ENCODE measurements at regions of chr3 and their contacts with region 1.

Region 1: DNA sequence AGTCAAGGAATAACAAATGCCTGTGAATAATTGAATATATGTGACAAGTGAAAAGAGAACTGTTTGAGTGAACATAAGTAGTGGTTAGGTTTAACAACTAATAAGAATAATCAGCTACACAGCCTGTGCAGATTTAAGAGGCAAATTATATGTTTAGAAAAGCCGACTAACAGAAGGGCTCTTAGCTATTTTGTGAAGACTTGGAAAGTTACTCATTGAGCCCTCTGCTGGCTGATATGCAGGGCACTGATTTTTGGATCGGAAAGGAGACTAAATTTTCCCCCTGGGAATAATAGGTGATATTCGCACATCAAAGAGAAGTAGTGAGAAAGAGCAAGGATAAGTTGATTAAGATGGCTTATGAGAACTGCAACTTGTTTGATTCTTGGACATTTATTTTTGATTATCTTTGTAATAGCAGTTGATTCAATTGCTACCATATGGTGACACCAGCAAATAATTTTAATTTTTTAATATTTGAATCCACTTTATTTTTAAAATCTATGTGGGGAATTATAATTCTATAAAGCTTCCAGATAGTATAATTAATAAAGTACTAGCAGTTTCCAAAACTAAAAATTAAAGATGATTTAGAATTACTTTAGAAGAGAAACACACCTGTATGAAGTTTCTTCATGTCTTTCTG is 156.2 kb downstream of the NLGN1 start:
- DNase-seq: peak in 1 of 2 experiments; percentile 4
- H3K4me3 ChIP-seq: no peak overlapping the region
- H3K27ac ChIP-seq: no peak overlapping the region
- H3K4me1 ChIP-seq: no peaks in the 10 kb centered on the region
- H3K27me3 ChIP-seq: no peaks in the 10 kb centered on the region
- CTCF ChIP-seq: peak; percentile 77

Region 2: GRCh38 chr3:172808969-172809546 is 744.7 kb before region 1 on chr3:
- CTCF ChIA-PET with region 1: no interaction called
- POLR2A ChIA-PET with region 1: no interaction called
- intact Hi-C with region 1: loop called (anchors 10 kb)
- DNase-seq: peak in 1 of 2 experiments; percentile 38
- H3K4me3 ChIP-seq: no peak overlapping the region
- H3K27ac ChIP-seq: no peak overlapping the region
- H3K4me1 ChIP-seq: no peaks in the 10 kb centered on the region
- H3K27me3 ChIP-seq: no peaks in the 10 kb centered on the region
- CTCF ChIP-seq: peak; percentile 78

Region 3: GRCh38 chr3:172931746-172932285 is 621.9 kb before region 1 on chr3:
- CTCF ChIA-PET with region 1: no interaction called
- POLR2A ChIA-PET with region 1: no interaction called
- intact Hi-C with region 1: no loop called
- DNase-seq: no peak
- H3K4me3 ChIP-seq: no peak overlapping the region
- H3K27ac ChIP-seq: no peak overlapping the region
- H3K4me1 ChIP-seq: no peaks in the 10 kb centered on the region
- H3K27me3 ChIP-seq: no peaks in the 10 kb centered on the region
- CTCF ChIP-seq: no peak

Region 4: DNA sequence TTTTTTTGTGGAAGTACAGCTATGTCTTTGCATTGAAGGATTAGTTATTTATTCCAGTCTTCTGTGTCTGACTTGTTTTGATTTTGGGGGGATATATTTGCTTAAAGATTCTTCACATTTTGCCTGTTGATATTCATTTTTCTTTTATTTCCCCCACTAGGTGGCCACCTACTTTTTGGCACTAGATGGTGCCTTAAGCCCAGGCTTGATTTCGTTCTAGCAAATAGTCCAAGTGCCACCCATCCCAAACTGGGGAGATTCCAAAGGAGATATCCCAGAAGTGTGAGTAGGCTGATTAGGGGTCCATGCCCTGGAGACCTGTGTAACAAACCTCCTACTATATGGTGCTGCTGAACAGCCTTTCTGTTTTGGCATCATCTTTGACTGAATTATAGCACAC is 332.7 kb before region 1 on chr3:
- CTCF ChIA-PET with region 1: no interaction called
- POLR2A ChIA-PET with region 1: no interaction called
- intact Hi-C with region 1: loop called (anchors 10 kb)
- DNase-seq: peak; percentile 11 to 31
- H3K4me3 ChIP-seq: no peak overlapping the region
- H3K27ac ChIP-seq: no peak overlapping the region
- H3K4me1 ChIP-seq: no peaks in the 10 kb centered on the region
- H3K27me3 ChIP-seq: no peaks in the 10 kb centered on the region
- CTCF ChIP-seq: peak; percentile 65

Region 5: GRCh38 chr3:173371848-173372487 is 181.8 kb before region 1 on chr3:
- CTCF ChIA-PET with region 1: no interaction called
- POLR2A ChIA-PET with region 1: no interaction called
- intact Hi-C with region 1: loop called (anchors 2 kb)
- DNase-seq: peak in 1 of 2 experiments; percentile 46
- H3K4me3 ChIP-seq: no peak overlapping the region
- H3K27ac ChIP-seq: no peak overlapping the region
- H3K4me1 ChIP-seq: no peaks in the 10 kb centered on the region
- H3K27me3 ChIP-seq: no peaks in the 10 kb centered on the region
- CTCF ChIP-seq: peak; percentile 76

Region 6: GRCh38 chr3:173411375-173411973 is 142.3 kb before region 1 on chr3:
- CTCF ChIA-PET with region 1: interaction called, 4 read pairs
- POLR2A ChIA-PET with region 1: no interaction called
- intact Hi-C with region 1: loop called (anchors 1 kb)
- DNase-seq: peak in 1 of 2 experiments; percentile 35
- H3K4me3 ChIP-seq: no peak overlapping the region
- H3K27ac ChIP-seq: no peak overlapping the region
- H3K4me1 ChIP-seq: no peaks in the 10 kb centered on the region
- H3K27me3 ChIP-seq: no peaks in the 10 kb centered on the region
- CTCF ChIP-seq: peak; percentile 76

Region 7: GRCh38 chr3:173591401-173591800 is 37.6 kb after region 1 on chr3:
- CTCF ChIA-PET with region 1: no interaction called
- POLR2A ChIA-PET with region 1: no interaction called
- intact Hi-C with region 1: no loop called
- DNase-seq: no peak
- H3K4me3 ChIP-seq: no peak overlapping the region
- H3K27ac ChIP-seq: no peak overlapping the region
- H3K4me1 ChIP-seq: no peaks in the 10 kb centered on the region
- H3K27me3 ChIP-seq: no peaks in the 10 kb centered on the region
- CTCF ChIP-seq: no peak

Measured in PC-9 (cell line).